HepG2 (cell line): ENCODE measurements at regions of chr1 and their contacts with region 1.

Region 1: GRCh38 chr1:114558544-114558943 is 22.9 kb downstream of the BCAS2 start:
- DNase-seq: peak; percentile 18
- ATAC-seq: peak; percentile 58; the same call in 1 of the 3 replicates
- H3K4me3 ChIP-seq: no peak overlapping the region
- H3K27ac ChIP-seq: no peak overlapping the region
- H3K4me1 ChIP-seq: peaks cover 6% of the 10 kb centered on the region; the same call in 1 of the 2 replicates
- H3K27me3 ChIP-seq: no peaks in the 10 kb centered on the region
- CTCF ChIP-seq: peak; percentile 48; the same call in 1 of the 2 replicates
- EP300 ChIP-seq: no peak
- POLR2A ChIP-seq: no peak
- RAD21 ChIP-seq: no peak

Region 2: DNA sequence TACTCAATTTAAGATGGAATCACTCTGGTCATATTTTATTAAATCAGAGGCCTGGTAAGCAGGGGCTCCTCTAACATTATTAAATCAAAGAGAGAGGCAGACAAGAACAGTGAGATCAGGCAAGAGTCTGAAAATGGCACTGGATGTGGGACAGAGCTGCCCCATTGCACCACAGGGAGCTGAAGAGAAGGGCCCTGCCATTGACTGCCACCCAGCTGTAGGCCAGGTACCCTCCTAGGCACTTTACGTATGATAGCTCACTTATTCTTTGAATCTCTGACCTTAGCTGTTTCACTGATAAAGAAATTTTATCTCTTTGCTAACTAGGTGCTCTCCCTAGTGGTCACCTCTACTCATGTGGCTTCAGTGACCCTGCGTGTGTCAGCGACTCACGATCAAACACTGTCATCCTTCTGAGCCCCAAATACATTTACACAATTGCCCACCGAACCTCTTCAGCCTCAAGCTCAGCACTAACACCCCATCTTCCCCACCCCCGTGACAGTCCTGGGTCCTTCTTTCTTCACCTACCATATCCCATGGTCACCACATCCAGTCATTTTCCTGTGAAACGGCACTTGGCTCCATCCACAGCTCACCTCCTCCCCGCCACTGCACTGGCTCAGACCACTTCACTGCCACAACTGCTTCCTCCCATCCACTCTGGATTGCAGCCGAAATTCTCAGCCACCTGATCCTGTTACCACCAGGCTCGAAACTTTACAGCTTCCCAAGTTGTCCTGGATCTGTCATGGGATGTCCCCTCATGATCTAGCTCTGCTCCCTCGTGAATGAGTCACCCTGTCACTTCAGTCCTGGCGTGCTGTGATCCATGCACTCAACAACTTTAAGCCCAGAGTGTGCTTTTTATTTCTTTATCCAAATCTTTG is 307.6 kb before region 1 on chr1:
- CTCF ChIA-PET with region 1: no interaction called
- POLR2A ChIA-PET with region 1: no interaction called
- in situ Hi-C with region 1: no loop called
- intact Hi-C with region 1: no loop called
- DNase-seq: no peak
- ATAC-seq: no peak; the same call in 2 of the 3 replicates
- H3K4me3 ChIP-seq: no peak overlapping the region
- H3K27ac ChIP-seq: no peak overlapping the region
- H3K4me1 ChIP-seq: no peaks in the 10 kb centered on the region
- H3K27me3 ChIP-seq: 0 out of 5 replicates have a peak, but pooled peaks cover 0 to 8% of the 10 kb centered on the region in 2 experiments
- CTCF ChIP-seq: no peak
- EP300 ChIP-seq: no peak
- POLR2A ChIP-seq: no peak
- RAD21 ChIP-seq: no peak

Region 3: DNA sequence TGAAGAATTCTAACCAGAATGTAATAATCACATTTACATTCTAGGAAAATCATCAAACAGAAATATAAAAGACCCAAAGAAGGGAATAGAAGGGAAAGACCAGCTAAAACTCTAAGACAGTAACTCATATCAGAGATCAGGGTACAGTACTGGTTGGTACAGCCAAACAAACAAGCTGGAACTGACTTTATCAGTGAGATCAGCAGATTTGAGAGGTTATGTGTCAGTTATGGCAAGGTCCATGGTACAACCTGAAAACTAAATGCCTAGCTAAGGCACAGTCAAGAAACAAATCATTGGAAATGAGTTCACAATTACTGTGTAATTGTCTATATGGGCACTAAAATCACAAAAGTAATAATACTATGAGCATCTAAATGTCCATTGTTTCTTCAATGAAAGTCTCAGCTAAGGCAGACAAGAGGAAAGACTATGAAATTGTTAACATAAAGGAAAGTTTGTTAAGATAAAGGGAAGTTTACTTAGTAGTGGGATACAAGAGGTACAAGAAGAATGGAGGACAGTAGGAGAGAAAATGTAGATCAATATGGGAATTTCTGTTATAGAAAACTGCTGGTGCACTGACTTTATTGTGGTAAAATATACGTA is 123.3 kb before region 1 on chr1:
- CTCF ChIA-PET with region 1: no interaction called
- POLR2A ChIA-PET with region 1: no interaction called
- in situ Hi-C with region 1: no loop called
- intact Hi-C with region 1: loop called (anchors 5 kb)
- DNase-seq: peak; percentile 78
- ATAC-seq: peak; percentile 99
- H3K4me3 ChIP-seq: peak overlapping the region in 1 of 3 experiments; percentile 17; a peak in 1 of 6 replicates
- H3K27ac ChIP-seq: peak overlapping the region; percentile 60
- H3K4me1 ChIP-seq: peaks cover 47% of the 10 kb centered on the region
- H3K27me3 ChIP-seq: no peaks in the 10 kb centered on the region
- CTCF ChIP-seq: no peak
- EP300 ChIP-seq: no peak
- POLR2A ChIP-seq: no peak
- RAD21 ChIP-seq: no peak